ENCODE measurements at regions of chr6 and their contacts with region 1.

Region 1: GRCh38 chr6:10404107-10404798 is 10.6 kb downstream of the TFAP2A start:
- DNase-seq: peak; percentile 96 to 97
- H3K4me3 ChIP-seq: peak overlapping the region; percentile 65
- H3K4me3 Mint-ChIP-seq: peak overlapping the region; percentile 83
- H3K27ac Mint-ChIP-seq: peak overlapping the region; percentile 89
- H3K4me1 ChIP-seq: peaks cover 22% of the 10 kb centered on the region
- H3K4me1 Mint-ChIP-seq: peaks cover 25% of the 10 kb centered on the region
- H3K27me3 ChIP-seq: no peaks in the 10 kb centered on the region
- H3K27me3 Mint-ChIP-seq: no peaks in the 10 kb centered on the region
- CTCF ChIP-seq: peak in 1 of 2 experiments; percentile 76

Region 2: DNA sequence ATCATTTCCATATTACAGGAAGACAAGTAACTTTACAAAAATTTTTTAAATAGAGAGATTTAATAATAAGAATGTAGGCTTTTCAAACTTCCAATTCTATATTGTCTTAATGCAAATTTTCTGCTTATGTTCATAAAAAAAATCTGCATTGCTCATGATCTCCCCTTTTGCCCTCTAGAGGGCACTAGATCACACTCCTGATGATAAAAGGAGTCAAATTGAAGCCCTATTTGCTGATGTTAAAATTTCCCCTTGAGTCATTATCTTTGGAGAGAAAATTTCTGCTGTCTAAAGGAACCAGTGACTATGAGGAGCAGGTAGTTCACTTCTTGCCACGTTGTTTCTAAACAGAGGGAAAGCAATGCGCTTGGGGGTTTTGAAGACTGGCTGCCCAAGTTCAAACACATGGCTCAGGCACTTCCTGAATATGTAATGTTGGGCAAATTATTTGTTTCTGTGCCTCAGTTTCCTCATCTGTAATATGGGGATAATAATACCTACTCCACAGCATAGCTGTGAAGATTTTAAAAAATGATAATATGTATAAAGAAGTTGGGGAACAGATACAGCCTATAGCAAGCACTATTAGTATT is 863.6 kb before region 1 on chr6:
- CTCF ChIA-PET with region 1: no interaction called
- POLR2A ChIA-PET with region 1: no interaction called
- intact Hi-C with region 1: loop called (anchors 10 kb)
- DNase-seq: peak in 1 of 2 experiments; percentile 27
- H3K4me3 ChIP-seq: no peak overlapping the region
- H3K4me3 Mint-ChIP-seq: no peak overlapping the region
- H3K27ac Mint-ChIP-seq: no peak overlapping the region
- H3K4me1 ChIP-seq: peaks cover 17% of the 10 kb centered on the region
- H3K4me1 Mint-ChIP-seq: peaks cover 7% of the 10 kb centered on the region
- H3K27me3 ChIP-seq: no peaks in the 10 kb centered on the region
- H3K27me3 Mint-ChIP-seq: no peaks in the 10 kb centered on the region
- CTCF ChIP-seq: peak; percentile 34 to 38

Region 3: GRCh38 chr6:10030942-10031537 is 373.2 kb before region 1 on chr6:
- CTCF ChIA-PET with region 1: no interaction called
- POLR2A ChIA-PET with region 1: interaction called, 6 read pairs
- intact Hi-C with region 1: loop called (anchors 5 kb)
- DNase-seq: peak in 1 of 2 experiments; percentile 11
- H3K4me3 ChIP-seq: no peak overlapping the region
- H3K4me3 Mint-ChIP-seq: no peak overlapping the region
- H3K27ac Mint-ChIP-seq: no peak overlapping the region
- H3K4me1 ChIP-seq: peaks cover 18% of the 10 kb centered on the region
- H3K4me1 Mint-ChIP-seq: peaks cover 6% of the 10 kb centered on the region
- H3K27me3 ChIP-seq: no peaks in the 10 kb centered on the region
- H3K27me3 Mint-ChIP-seq: no peaks in the 10 kb centered on the region
- CTCF ChIP-seq: peak in 1 of 2 experiments; percentile 62

Region 4: DNA sequence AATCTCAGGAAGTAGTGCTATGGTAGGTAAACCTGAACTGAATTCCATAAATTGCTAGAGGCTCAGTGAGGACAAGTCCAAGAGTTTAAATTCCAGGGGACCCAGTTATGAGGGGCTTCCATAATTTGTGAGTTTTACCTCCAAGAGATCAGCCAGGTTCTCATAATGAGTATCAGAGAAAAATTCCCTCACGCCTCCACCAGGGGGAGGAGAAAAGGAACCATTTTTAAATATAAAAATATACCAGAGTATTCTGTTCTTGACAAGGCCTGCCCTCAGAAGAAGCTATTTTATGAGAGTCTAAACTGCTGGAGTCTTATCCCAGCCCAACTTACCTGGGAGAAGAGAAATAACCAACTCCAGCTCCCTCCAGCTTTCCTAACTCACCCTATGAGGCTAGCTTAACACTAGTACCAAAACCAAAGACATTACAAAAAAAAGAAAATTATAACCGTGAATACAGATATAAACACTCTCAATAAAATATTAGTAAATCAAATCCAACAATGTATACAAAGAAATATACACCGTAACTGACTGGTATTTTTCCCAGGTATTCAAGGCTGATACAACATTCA is 148.1 kb before region 1 on chr6:
- CTCF ChIA-PET with region 1: no interaction called
- POLR2A ChIA-PET with region 1: no interaction called
- intact Hi-C with region 1: loop called (anchors 5 kb)
- DNase-seq: peak in 1 of 2 experiments; percentile 16
- H3K4me3 ChIP-seq: no peak overlapping the region
- H3K4me3 Mint-ChIP-seq: no peak overlapping the region
- H3K27ac Mint-ChIP-seq: no peak overlapping the region
- H3K4me1 ChIP-seq: peaks cover 7% of the 10 kb centered on the region; the same call in 1 of the 2 replicates
- H3K4me1 Mint-ChIP-seq: peaks cover under 1% of the 10 kb centered on the region
- H3K27me3 ChIP-seq: no peaks in the 10 kb centered on the region
- H3K27me3 Mint-ChIP-seq: no peaks in the 10 kb centered on the region
- CTCF ChIP-seq: peak; percentile 40 to 54

Region 5: DNA sequence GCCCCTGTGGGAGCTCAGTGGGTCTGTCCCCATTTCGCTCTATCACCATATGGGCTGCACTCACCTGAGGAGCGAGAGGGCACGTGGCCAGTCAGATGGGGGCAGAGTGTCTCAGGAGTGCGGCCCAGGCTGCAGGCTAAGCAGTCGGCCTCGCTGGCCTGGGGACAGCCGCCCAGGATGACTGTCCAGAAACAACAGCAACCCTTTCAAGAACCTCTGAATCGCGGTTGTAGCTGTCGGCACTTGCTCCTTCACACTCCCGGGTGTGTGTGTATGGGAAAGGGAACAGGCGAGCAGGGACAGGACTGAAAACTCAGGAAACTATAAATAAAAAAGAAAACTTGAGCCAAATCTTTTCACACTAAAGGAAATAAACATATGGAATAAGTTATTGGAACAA is 52.5 kb before region 1 on chr6:
- CTCF ChIA-PET with region 1: no interaction called
- POLR2A ChIA-PET with region 1: no interaction called
- intact Hi-C with region 1: loop called (anchors 5 kb)
- DNase-seq: no peak
- H3K4me3 ChIP-seq: no peak overlapping the region
- H3K4me3 Mint-ChIP-seq: no peak overlapping the region
- H3K27ac Mint-ChIP-seq: no peak overlapping the region
- H3K4me1 ChIP-seq: no peaks in the 10 kb centered on the region
- H3K4me1 Mint-ChIP-seq: peaks cover 7% of the 10 kb centered on the region
- H3K27me3 ChIP-seq: no peaks in the 10 kb centered on the region
- H3K27me3 Mint-ChIP-seq: no peaks in the 10 kb centered on the region
- CTCF ChIP-seq: no peak